Activated CD4-positive, alpha-beta T cell treated with anti-CD3 and anti-CD28 coated beads for 36 hours (primary cell): ENCODE measurements at regions of chr12 and their contacts with region 1.

Region 1: GRCh38 chr12:120317224-120318105 is 10.1 kb downstream of the PLA2G1B start:
- DNase-seq: peak; percentile 100
- ATAC-seq: peak; percentile 100
- H3K4me3 Mint-ChIP-seq: peak overlapping the region; percentile 92
- H3K27ac Mint-ChIP-seq: peak overlapping the region; percentile 94
- H3K4me1 Mint-ChIP-seq: peaks cover 12% of the 10 kb centered on the region
- H3K27me3 Mint-ChIP-seq: no peaks in the 10 kb centered on the region

Region 2: DNA sequence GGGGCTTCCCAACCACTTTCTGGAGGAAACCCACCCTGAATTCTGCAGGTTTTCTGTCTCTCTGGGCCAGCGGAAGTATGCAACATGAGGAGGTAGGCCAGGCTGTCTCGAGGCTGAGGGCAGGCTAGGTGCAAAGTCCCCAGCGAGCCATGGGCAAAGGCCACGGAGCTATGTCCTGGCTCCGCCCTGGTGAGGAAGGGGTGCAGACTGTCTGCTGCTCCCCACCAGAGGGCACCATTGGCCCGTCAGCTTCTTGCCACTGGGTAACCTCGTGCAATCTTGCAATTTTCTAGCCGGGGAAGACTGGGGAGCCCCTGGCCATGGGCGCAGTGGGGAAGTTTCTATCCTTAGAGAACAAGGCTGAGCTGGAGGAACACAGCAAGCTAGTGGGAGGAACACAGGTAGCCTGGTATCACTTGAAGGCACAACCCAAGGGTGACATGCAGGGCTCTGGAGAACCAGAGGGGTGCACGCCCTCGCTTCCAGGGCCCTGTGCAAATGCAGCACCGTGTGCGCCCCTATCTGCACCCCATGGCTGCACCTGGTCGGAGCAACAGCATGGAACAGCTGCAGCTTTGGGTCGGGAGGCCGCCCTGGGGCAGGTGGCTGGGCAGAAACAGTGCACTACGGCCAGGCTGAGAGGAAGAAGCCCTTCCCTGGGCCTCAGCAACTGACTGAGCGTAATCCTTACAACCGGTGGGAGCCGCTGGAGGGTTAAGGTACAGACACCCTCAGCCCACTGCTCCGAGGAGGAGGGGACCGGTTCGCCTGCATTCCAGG is 89.0 kb before region 1 on chr12:
- CTCF ChIA-PET with region 1: interaction called, 14 read pairs
- POLR2A ChIA-PET with region 1: interaction called, 3 read pairs
- intact Hi-C with region 1: loop called in 1 of 2 experiments (anchors 1 kb)
- DNase-seq: peak; percentile 96
- ATAC-seq: peak; percentile 65
- H3K4me3 Mint-ChIP-seq: peak overlapping the region; percentile 16
- H3K27ac Mint-ChIP-seq: peak overlapping the region; percentile 79
- H3K4me1 Mint-ChIP-seq: peaks cover 84% of the 10 kb centered on the region
- H3K27me3 Mint-ChIP-seq: no peaks in the 10 kb centered on the region

Region 3: GRCh38 chr12:120301962-120302815 is 15.3 kb before region 1 on chr12 and contains the start of gene SIRT4:
- CTCF ChIA-PET with region 1: interaction called, 26 read pairs
- POLR2A ChIA-PET with region 1: interaction called, 17 read pairs
- intact Hi-C with region 1: loop called (anchors 1 kb)
- DNase-seq: peak; percentile 94
- ATAC-seq: peak; percentile 100
- H3K4me3 Mint-ChIP-seq: peak within 1 kb of the TSS; percentile 95
- H3K27ac Mint-ChIP-seq: peak within 1 kb of the TSS; percentile 97
- H3K4me1 Mint-ChIP-seq: peaks cover 9% of the 10 kb centered on the region
- H3K27me3 Mint-ChIP-seq: no peaks in the 10 kb centered on the region
- total RNA-seq, gene SIRT4: 2.2 to 4.0 TPM

Region 4: GRCh38 chr12:120495723-120496412 is 178.4 kb after region 1 on chr12 and contains the start of gene DYNLL1:
- CTCF ChIA-PET with region 1: no interaction called
- POLR2A ChIA-PET with region 1: no interaction called
- intact Hi-C with region 1: loop called in 1 of 2 experiments (anchors 1 kb)
- DNase-seq: peak; percentile 98
- ATAC-seq: peak; percentile 98
- H3K4me3 Mint-ChIP-seq: peak within 1 kb of the TSS; percentile 91
- H3K27ac Mint-ChIP-seq: peak within 1 kb of the TSS; percentile 75
- H3K4me1 Mint-ChIP-seq: peaks cover 31% of the 10 kb centered on the region
- H3K27me3 Mint-ChIP-seq: no peaks in the 10 kb centered on the region
- total RNA-seq, gene DYNLL1: 166 to 169 TPM

Region 5: GRCh38 chr12:120710031-120710804 is 392.8 kb after region 1 on chr12 and contains the start of gene UNC119B:
- CTCF ChIA-PET with region 1: no interaction called
- POLR2A ChIA-PET with region 1: no interaction called
- intact Hi-C with region 1: loop called in 1 of 2 experiments (anchors 10 kb)
- DNase-seq: peak; percentile 83
- ATAC-seq: peak; percentile 78
- H3K4me3 Mint-ChIP-seq: peak within 1 kb of the TSS; percentile 86
- H3K27ac Mint-ChIP-seq: peak within 1 kb of the TSS; percentile 82
- H3K4me1 Mint-ChIP-seq: peaks cover 34% of the 10 kb centered on the region
- H3K27me3 Mint-ChIP-seq: no peaks in the 10 kb centered on the region
- total RNA-seq, gene UNC119B: 20.1 to 26.6 TPM